Activated CD4-positive, alpha-beta memory T cell treated with anti-CD3 and anti-CD28 coated beads for 36 hours (primary cell): ENCODE measurements at regions of chr11 and their contacts with region 1.

Region 1: DNA sequence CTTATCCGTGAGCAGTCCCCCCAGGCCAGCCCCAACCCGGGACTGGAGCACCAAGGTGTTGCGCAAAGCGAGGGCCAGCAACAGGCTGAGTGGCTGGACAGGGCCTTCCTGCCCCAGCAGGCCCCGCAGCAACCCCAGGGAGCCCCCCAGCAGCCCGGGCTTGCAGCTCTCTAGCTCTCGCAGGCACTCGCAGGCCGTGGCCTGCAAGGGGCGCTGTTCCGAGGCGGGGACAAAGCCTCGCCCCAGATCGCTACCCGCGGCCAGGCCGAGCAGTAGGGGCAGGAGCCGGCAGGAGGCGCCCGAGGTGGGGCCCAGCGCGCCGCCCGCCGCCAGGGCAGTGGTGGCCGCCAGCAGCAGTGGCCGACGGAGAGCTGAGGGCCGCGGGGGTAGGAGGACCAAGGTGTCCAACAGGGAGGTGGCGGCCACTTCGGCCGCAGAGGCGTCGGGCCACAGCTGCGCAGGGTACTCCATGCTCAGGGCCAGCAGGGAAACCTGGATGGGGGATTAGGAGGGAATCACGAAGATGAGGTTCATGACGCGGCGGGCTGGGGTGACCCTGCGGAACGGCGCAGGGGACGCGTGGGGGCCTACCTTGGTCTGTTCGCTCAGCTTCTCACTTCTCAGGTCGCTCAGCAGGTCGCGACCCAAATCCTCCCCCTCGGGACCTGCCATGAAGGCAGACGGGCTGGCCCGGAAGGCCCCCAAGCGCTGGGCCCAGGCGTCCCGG is 762 bp downstream of the AP5B1 start:
- DNase-seq: peak; percentile 92
- H3K4me3 Mint-ChIP-seq: peak overlapping the region; percentile 87
- H3K27ac Mint-ChIP-seq: peak overlapping the region; percentile 76
- H3K4me1 Mint-ChIP-seq: peaks cover 17% of the 10 kb centered on the region
- H3K27me3 Mint-ChIP-seq: peaks cover 4% of the 10 kb centered on the region

Region 2: DNA sequence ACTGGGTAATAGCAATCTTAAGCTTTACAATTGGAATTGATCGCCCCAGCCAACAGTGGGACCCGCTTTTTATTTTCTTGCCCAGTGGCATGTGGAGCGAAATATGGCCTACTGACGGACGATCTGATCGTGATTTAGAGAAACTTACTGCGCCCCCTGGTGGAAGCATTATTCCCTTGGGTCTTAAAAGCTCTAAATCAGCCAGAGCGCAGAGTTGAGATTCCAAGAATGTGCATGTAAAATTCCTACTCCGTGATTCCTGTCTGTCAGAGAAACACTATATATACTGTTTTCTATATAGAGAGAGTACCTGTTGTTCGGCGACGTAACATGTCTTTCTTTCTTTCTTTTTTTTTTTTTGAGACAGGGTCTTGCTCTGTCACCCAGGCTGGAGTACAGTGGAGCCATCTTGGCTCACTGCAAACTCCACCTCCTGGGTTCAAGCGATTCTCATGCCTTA is 450.0 kb before region 1 on chr11:
- CTCF ChIA-PET with region 1: no interaction called
- POLR2A ChIA-PET with region 1: no interaction called
- intact Hi-C with region 1: no loop called
- DNase-seq: peak; percentile 88
- H3K4me3 Mint-ChIP-seq: no peak overlapping the region
- H3K27ac Mint-ChIP-seq: no peak overlapping the region
- H3K4me1 Mint-ChIP-seq: peaks cover 12% of the 10 kb centered on the region
- H3K27me3 Mint-ChIP-seq: peaks cover 3% of the 10 kb centered on the region

Region 3: DNA sequence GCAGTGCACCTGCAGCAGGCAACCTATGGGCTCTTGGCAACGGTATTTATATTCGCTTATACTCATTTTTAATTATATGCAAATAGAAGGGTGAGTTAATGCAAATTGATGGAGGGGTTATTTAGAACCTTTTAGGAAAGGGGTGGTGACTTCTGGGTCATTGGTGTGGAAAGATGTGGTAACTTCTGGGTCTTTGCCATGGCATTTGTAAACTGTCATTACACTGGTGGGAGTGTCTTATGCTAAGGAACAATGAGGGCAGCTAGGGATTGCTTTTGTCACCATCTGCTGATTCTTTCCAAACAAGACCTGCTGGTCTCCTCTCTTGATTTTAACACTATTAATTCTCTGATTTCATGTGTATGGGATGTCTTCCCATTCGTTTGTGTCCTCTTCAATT is 79.6 kb before region 1 on chr11:
- CTCF ChIA-PET with region 1: interaction called, 12 read pairs
- POLR2A ChIA-PET with region 1: no interaction called
- intact Hi-C with region 1: no loop called
- DNase-seq: no peak
- H3K4me3 Mint-ChIP-seq: no peak overlapping the region
- H3K27ac Mint-ChIP-seq: no peak overlapping the region
- H3K4me1 Mint-ChIP-seq: no peaks in the 10 kb centered on the region
- H3K27me3 Mint-ChIP-seq: peaks cover 2% of the 10 kb centered on the region

Region 4: DNA sequence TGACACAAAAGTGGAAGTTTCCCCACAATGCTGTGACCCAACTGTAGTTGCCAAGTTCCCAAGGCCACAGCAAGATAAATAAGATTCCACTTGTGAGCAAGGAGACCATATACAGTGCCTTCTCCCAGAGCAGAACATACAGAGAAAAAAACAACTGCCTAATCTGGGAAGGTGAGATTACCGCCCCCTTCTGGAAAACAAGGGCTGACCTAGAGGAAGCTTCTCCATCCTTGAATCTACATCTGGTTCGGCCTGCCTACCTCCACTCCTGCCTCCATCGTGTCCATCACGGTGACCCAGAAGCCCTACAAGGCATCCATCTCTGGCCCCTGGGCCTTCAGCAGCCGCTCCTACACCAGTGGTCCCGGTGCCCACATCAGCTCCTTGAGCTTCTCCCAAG is 53.4 kb before region 1 on chr11:
- CTCF ChIA-PET with region 1: interaction called, 13 read pairs
- POLR2A ChIA-PET with region 1: no interaction called
- intact Hi-C with region 1: no loop called
- DNase-seq: no peak
- H3K4me3 Mint-ChIP-seq: no peak overlapping the region
- H3K27ac Mint-ChIP-seq: no peak overlapping the region
- H3K4me1 Mint-ChIP-seq: no peaks in the 10 kb centered on the region
- H3K27me3 Mint-ChIP-seq: peaks cover under 1% of the 10 kb centered on the region

Region 5: GRCh38 chr11:65791691-65792213 is 11.7 kb after region 1 on chr11:
- CTCF ChIA-PET with region 1: interaction called, 51 read pairs
- POLR2A ChIA-PET with region 1: no interaction called
- intact Hi-C with region 1: no loop called
- DNase-seq: peak; percentile 84
- H3K4me3 Mint-ChIP-seq: no peak overlapping the region
- H3K27ac Mint-ChIP-seq: no peak overlapping the region
- H3K4me1 Mint-ChIP-seq: peaks cover 17% of the 10 kb centered on the region
- H3K27me3 Mint-ChIP-seq: peaks cover 26% of the 10 kb centered on the region

Region 6: DNA sequence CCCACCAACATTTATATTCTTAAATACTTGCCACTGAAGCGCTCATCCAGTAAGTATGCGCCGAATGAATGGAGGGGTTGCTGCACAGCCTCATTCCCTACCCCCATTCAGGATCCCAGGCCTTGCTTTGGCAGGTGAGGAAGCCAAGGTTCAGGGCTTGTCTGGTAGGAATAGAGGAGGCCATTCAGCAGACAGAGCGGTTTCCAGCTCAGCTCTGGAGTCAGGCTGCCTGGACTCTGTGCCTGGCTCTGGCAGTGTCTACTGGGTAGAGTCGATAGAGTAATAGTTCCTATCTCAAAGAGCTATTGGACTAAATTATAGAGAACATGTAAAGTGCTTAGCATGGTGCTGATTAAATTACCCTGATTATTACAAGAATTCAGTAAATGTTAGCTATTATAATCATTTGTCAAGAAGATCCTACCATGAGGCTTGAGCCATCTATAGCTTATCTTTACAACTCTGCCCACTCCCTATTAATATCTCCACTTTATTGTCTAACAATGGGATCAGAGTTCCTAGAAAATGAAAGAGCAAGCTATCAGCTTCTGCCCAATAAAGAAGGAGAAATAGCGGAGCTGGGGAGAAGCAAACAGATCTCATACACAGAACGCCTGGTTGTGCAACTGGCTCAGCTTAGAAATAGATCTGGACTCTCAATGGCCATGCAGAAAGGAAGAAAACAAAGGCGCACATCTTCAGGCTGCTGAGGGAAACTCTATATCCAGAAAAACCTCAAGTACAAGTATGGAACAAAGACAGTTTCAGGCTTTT is 47.1 kb after region 1 on chr11:
- CTCF ChIA-PET with region 1: interaction called, 25 read pairs
- POLR2A ChIA-PET with region 1: interaction called, 6 read pairs
- intact Hi-C with region 1: no loop called
- DNase-seq: no peak
- H3K4me3 Mint-ChIP-seq: no peak overlapping the region
- H3K27ac Mint-ChIP-seq: peak overlapping the region; percentile 18
- H3K4me1 Mint-ChIP-seq: peaks cover 19% of the 10 kb centered on the region
- H3K27me3 Mint-ChIP-seq: no peaks in the 10 kb centered on the region

Region 7: GRCh38 chr11:66001942-66002647 is 222.1 kb after region 1 on chr11 and contains the starts of genes BANF1 and EIF1AD:
- CTCF ChIA-PET with region 1: no interaction called
- POLR2A ChIA-PET with region 1: no interaction called
- intact Hi-C with region 1: loop called (anchors 2 kb)
- DNase-seq: peak; percentile 97
- H3K4me3 Mint-ChIP-seq: peak within 1 kb of the TSS; percentile 99
- H3K27ac Mint-ChIP-seq: peak within 1 kb of the TSS; percentile 99
- H3K4me1 Mint-ChIP-seq: peaks cover 38% of the 10 kb centered on the region
- H3K27me3 Mint-ChIP-seq: no peaks in the 10 kb centered on the region
- total RNA-seq, gene BANF1: 264 to 280 TPM
- total RNA-seq, gene EIF1AD: 41.2 to 42.7 TPM